B cell (primary cell): ENCODE measurements at regions of chr7 and their contacts with region 1.

Region 1: DNA sequence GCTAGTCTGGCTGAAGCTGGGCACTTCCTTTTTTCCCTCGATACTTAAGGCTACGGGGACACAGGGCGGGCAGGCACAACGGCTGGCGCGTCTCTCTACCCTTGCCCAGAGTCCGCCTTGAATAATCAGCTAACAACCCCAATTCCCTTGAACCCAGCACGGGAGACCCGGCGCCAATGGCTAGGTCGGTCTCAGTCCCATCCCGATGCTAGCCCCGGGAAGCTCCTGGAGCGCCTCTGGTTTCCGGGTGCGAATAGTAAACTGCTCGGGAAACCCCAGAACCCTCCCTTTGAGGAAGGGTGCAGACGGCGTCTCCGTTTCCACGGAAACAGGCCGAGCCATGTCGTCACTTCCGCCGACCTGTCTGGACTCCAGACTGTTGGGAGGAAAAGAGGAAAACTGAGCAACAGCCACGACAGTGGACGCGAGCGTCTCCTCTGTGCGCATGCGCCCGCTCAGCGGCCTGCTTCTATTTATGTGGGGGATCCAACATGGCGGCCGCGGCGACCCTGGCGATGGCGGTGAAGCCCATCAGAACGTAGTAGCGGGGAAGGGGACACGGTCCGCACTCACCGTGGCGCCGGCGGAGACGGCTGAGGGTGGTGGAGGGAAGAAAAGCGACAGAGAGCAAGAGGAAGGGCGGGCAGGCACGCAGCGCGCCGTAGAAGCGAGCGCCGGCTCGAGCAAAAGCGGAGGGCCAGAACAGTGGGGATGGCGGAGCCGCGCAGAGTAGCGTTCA is at the start of gene UBN2:
- DNase-seq: peak; percentile 95
- ATAC-seq: peak; percentile 80
- H3K4me3 ChIP-seq: peak within 1 kb of the TSS; percentile 77 to 96 (median 90)
- H3K4me3 Mint-ChIP-seq: peak within 1 kb of the TSS; percentile 96
- H3K27ac ChIP-seq: peak within 1 kb of the TSS; percentile 60 to 90
- H3K27ac Mint-ChIP-seq: peak within 1 kb of the TSS; percentile 95
- H3K4me1 ChIP-seq: peaks cover 12 to 14% of the 10 kb centered on the region in 2 donors
- H3K4me1 Mint-ChIP-seq: peaks cover 25% of the 10 kb centered on the region
- H3K27me3 ChIP-seq: peaks cover 0 to 3% (median 0%) of the 10 kb centered on the region in 4 experiments
- H3K27me3 Mint-ChIP-seq: peaks cover 7% of the 10 kb centered on the region
- CTCF ChIP-seq: no peak
- total RNA-seq, gene UBN2: 33.4 and 36.1 TPM in 2 replicates

Region 2: DNA sequence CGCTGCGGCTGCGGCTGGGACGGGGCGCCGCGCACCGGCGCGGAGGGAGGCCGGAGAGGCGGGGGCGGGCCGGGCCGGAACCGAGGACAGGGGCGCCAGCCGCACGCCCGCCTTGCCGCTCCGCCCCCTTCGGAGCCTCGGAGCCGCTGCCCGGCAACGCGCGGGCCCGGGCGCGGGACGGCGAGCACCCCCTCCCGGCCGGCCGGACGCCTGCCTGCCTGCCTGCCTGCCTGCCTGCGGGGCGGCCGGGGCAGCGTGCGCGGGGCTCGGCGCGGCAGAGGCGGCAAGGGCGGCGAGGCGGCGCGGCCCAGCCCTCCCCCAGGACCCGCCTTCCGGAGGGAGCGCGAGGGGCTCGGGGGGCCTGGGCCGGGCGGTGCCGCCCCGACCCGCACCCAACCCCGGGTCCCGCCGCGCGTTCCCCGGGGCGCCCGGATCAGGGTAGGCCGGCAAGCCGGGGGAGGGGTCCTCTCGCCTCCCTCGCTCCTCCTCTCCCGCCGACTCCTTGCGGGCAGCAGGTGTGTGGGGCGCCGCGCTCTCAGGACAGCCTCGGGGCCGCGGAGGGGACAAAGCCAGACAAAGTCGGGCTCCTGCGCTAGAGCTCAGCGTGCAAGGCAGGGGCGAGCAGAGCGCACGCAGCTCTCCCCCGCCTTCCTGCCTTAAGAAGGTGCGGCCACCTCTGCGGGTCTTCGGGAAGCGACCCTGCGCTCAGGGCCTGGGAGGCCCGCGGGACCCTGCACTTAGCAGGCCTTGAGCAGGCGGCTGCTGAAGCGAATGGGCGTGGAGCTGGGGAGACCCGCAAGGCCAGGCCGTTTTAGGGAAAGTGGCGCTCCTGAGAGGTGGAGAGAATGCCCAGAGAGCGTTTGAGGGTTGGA is 249.4 kb before region 1 on chr7 and contains the start of gene KIAA1549:
- CTCF ChIA-PET with region 1: no interaction called
- POLR2A ChIA-PET with region 1: no interaction called
- intact Hi-C with region 1: loop called (anchors 5 kb)
- DNase-seq: peak; percentile 65
- ATAC-seq: peak; percentile 88
- H3K4me3 ChIP-seq: peak within 1 kb of the TSS; percentile 31 to 62 (median 52)
- H3K4me3 Mint-ChIP-seq: peak within 1 kb of the TSS; percentile 91
- H3K27ac ChIP-seq: no peak within 1 kb of the TSS
- H3K27ac Mint-ChIP-seq: peak within 1 kb of the TSS; percentile 50
- H3K4me1 ChIP-seq: peaks cover 12 to 17% of the 10 kb centered on the region in 2 donors
- H3K4me1 Mint-ChIP-seq: peaks cover 14% of the 10 kb centered on the region
- H3K27me3 ChIP-seq: peaks cover 0 to 39% (median 24%) of the 10 kb centered on the region in 4 experiments
- H3K27me3 Mint-ChIP-seq: peaks cover 46% of the 10 kb centered on the region
- CTCF ChIP-seq: no peak
- total RNA-seq, gene KIAA1549: 0.36 and 0.52 TPM in 2 replicates

Region 3: DNA sequence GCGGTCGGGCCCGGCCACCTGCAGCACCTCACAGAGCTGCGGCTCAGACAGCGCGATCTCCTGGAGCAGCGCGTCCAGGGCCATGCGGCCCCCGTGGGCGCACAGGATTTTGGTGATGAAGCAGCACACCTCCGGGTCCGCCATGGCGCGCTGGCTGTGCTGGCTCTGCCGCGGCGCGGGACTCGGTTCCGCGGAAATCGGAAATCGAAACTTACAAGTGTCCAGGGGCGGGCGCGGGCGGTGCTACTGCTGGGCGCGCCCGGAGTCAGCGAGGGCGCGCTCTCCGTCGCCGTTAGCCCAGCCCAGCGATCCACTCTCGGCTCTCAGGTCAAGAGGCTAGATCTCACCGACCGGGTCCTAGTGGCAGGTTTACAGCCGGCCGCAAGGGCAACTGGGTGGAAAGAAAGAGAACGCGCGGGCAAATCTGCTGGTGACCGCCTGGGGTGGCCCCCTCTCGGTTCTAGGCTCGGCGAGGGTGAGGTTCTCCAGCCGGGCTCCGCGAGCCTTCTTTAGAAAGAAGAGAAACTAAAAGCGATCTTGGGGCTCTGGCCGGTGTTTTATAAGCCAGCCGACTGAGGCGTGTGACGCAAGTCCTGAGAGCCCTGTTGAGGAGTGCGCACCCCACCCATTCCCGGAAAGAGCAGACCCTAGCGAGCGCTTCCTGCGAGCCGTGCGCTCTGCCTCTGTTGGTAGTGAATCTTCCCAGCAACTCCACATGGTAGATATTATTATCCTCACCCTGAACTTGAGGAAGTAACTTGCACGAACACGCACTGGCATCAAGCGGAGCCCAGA is 121.6 kb before region 1 on chr7 and contains the start of gene ZC3HAV1:
- CTCF ChIA-PET with region 1: no interaction called
- POLR2A ChIA-PET with region 1: no interaction called
- intact Hi-C with region 1: loop called (anchors 1 kb)
- DNase-seq: peak; percentile 94
- ATAC-seq: peak; percentile 78
- H3K4me3 ChIP-seq: peak within 1 kb of the TSS; percentile 85 to 98 (median 95)
- H3K4me3 Mint-ChIP-seq: peak within 1 kb of the TSS; percentile 88
- H3K27ac ChIP-seq: peak within 1 kb of the TSS; percentile 90 to 96
- H3K27ac Mint-ChIP-seq: peak within 1 kb of the TSS; percentile 99
- H3K4me1 ChIP-seq: peaks cover 18 to 26% of the 10 kb centered on the region in 2 donors
- H3K4me1 Mint-ChIP-seq: peaks cover 34% of the 10 kb centered on the region
- H3K27me3 ChIP-seq: no peaks in the 10 kb centered on the region
- H3K27me3 Mint-ChIP-seq: no peaks in the 10 kb centered on the region
- CTCF ChIP-seq: no peak
- total RNA-seq, gene ZC3HAV1: 101 TPM in 2 replicates

Region 4: GRCh38 chr7:139133335-139134139 is 97.4 kb before region 1 on chr7:
- CTCF ChIA-PET with region 1: interaction called, 3 read pairs
- POLR2A ChIA-PET with region 1: no interaction called
- intact Hi-C with region 1: loop called (anchors 1 kb)
- DNase-seq: peak; percentile 90
- ATAC-seq: peak; percentile 96
- H3K4me3 ChIP-seq: peak overlapping the region; percentile 46 to 63 (median 58)
- H3K4me3 Mint-ChIP-seq: peak overlapping the region; percentile 93
- H3K27ac ChIP-seq: peak overlapping the region; percentile 18 to 69
- H3K27ac Mint-ChIP-seq: peak overlapping the region; percentile 88
- H3K4me1 ChIP-seq: peaks cover 9 to 13% of the 10 kb centered on the region in 2 donors
- H3K4me1 Mint-ChIP-seq: peaks cover 18% of the 10 kb centered on the region
- H3K27me3 ChIP-seq: no peaks in the 10 kb centered on the region
- H3K27me3 Mint-ChIP-seq: no peaks in the 10 kb centered on the region
- CTCF ChIP-seq: no peak

Region 5: DNA sequence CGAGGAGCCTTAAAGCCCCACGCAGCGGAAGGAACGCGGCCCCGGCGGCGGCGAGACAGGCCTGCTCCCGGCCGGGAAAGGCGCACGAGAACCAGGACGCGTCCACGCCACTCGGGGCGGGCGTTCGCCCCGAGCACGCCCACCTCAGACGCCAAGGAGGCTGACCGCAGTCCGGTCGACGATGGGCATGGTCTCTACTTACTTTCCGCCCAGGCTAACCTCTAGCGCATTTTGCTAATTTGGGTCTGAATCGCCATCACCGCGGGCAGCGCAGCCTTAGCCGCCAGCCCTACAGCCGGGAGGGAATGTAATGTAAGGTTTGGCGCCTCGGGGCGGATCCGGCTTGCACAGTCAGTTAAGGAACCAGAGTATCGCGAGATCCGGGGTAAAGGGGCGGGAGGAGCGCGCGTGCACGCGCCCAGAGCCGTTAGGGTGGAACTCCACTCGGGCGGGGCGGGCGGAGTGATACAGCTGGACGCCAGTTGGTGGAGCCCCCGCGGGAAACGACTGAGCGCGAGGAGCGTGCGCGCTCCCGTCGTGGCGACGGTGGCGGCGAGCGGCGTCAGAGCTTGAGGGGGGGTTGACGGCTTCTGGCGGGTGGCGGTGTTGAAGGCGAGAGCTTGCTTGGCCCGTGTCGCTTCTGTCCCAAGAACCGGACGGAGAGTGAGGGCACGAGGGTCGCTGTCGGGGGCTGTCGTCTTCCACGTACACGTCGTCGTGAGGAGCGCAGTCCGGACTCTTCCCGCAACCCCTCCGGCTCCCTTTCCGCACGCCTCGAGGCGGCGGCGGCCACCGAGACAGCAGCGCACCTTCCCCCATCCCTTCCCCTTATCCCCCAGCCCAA is 128.6 kb after region 1 on chr7 and contains the start of gene LUC7L2:
- CTCF ChIA-PET with region 1: interaction called, 3 read pairs
- POLR2A ChIA-PET with region 1: interaction called, 3 read pairs
- intact Hi-C with region 1: loop called (anchors 1 kb)
- DNase-seq: peak; percentile 99
- ATAC-seq: peak; percentile 77
- H3K4me3 ChIP-seq: peak within 1 kb of the TSS; percentile 91 to 96 (median 96)
- H3K4me3 Mint-ChIP-seq: peak within 1 kb of the TSS; percentile 99
- H3K27ac ChIP-seq: peak within 1 kb of the TSS; percentile 98 to 99
- H3K27ac Mint-ChIP-seq: peak within 1 kb of the TSS; percentile 100
- H3K4me1 ChIP-seq: peaks cover 7 to 24% of the 10 kb centered on the region in 2 donors
- H3K4me1 Mint-ChIP-seq: peaks cover 39% of the 10 kb centered on the region
- H3K27me3 ChIP-seq: no peaks in the 10 kb centered on the region
- H3K27me3 Mint-ChIP-seq: no peaks in the 10 kb centered on the region
- CTCF ChIP-seq: no peak
- total RNA-seq, gene LUC7L2: 141 and 142 TPM in 2 replicates

Region 6: DNA sequence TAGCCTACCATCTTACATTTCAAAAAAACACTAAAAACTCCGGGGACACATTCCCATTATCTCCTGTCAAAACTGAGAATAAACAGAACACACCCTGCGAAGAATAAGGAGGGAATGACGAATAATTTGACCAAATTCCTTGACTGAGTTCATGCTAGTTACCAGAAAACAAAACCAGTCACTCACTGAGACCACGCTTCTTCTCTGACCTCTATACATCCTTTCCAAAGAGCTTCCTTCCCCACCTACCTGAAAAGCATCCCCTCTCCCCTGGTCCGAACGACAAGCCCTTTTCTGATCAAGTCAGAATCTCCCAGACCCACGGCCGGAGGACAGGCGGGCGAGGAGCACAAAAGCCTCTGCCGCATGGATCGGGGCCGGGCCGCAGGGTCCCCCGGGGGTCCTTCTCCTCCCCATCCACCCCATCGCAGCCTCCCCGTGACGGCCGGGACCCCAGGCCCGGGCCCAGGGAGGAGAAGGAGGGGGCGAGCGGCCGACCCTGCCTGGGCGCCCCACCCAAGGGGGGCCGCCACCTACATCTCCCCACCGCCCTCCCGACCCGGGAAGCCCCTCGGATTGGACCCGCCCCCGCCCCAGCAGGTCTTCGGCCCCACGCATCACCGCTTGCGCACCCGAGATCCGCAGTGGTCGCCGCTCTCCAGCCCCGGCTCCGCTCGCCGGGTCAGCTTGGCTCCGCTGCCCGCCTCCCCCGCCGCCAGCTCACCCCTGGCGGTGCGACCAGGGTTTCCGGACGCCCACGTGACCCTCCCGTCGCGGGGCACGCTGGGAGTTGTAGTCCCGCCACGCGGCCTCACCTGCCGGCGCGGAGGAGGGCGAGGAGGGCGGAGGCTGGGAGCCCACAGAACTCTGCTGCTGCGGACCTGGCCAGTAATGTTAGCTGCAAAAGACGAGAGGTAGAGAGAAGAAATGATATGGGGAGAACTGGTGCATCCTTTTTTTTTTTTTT is 1167.1 kb after region 1 on chr7 and contains the start of gene SLC37A3:
- CTCF ChIA-PET with region 1: no interaction called
- POLR2A ChIA-PET with region 1: no interaction called
- intact Hi-C with region 1: loop called (anchors 10 kb)
- DNase-seq: peak; percentile 86
- ATAC-seq: peak; percentile 97
- H3K4me3 ChIP-seq: peak within 1 kb of the TSS; percentile 62 to 69 (median 67)
- H3K4me3 Mint-ChIP-seq: peak within 1 kb of the TSS; percentile 98
- H3K27ac ChIP-seq: peak within 1 kb of the TSS in 1 of 2 donors; percentile 75
- H3K27ac Mint-ChIP-seq: peak within 1 kb of the TSS; percentile 83
- H3K4me1 ChIP-seq: peaks cover 7 to 11% of the 10 kb centered on the region in 2 donors
- H3K4me1 Mint-ChIP-seq: peaks cover 13% of the 10 kb centered on the region
- H3K27me3 ChIP-seq: no peaks in the 10 kb centered on the region
- H3K27me3 Mint-ChIP-seq: peaks cover 3% of the 10 kb centered on the region
- CTCF ChIP-seq: no peak
- total RNA-seq, gene SLC37A3: 20.1 TPM in 2 replicates